Head of caudate nucleus (tissue), 42 donors: ENCODE measurements at regions of chr7 and their contacts with region 1.

Region 1: DNA sequence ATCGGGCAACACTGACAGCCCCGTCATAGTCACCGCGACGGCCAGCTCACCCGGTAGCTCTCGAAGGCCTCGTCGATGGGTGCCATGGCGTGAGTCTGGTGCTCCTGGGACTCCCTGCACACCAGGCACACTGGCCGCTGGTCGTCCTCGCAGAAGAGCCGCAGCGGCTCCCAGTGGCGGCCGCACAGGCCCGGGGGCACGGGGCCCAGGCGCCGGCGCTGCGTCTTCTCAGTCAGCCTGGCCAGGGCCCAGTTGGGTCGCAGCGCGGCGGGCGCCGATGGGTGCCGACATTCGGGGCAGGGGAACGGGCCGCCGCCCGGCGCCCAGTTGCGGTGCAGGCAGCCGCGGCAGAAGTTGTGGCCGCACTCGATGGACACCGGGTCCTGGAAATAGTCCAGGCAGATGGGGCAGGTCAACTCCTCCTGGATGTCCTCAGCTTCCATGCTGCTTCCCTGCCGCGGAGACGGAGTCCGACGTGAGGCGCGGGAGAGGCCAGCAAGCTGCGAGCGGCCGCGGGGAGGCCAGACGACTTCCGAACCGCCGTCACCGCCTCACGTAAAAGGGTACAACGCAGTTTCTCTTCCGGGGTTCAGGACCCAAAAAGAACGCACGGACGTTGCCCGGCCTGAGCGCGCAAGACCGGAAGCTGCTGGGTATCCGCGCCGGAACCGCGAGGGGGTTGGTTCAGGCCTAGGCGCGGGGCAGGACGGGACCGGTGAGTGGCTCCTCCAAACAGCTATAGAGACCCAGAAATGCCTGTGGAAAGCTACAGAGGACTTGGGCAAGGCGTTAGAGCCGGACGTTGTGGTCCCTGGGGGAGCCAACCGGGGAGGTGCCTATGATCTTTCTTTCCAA is at the start of gene TRIM4:
- DNase-seq: peak; percentile 87 to 97 (median 92)

Region 2: GRCh38 chr7:99953649-99954048 is 34.5 kb after region 1 on chr7:
- intact Hi-C with region 1: no loop called
- DNase-seq: no peak

Region 3: DNA sequence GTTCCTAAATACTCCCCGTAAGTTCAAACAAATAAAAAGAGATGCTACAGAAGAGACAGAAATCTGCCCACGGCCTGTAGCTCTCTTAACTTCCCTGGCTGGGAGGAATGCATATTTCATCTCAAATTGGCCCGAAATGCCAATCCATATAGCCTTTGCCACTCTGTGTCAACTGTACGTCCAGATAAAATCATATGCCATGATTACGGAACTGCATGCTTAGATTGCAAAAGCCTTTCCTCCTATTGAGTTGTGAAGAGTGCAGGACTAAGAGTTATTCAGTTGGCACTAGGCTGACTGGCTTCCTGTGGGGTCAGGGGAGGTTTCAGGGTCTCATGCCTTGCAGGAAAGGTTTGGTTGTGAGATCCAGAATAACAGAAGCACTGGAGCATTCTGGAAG is 66.3 kb after region 1 on chr7:
- intact Hi-C with region 1: loop called (anchors 5 kb)
- DNase-seq: no peak